HCT116 (cell line): ENCODE measurements at regions of chr6 and their contacts with region 1.

Region 1: DNA sequence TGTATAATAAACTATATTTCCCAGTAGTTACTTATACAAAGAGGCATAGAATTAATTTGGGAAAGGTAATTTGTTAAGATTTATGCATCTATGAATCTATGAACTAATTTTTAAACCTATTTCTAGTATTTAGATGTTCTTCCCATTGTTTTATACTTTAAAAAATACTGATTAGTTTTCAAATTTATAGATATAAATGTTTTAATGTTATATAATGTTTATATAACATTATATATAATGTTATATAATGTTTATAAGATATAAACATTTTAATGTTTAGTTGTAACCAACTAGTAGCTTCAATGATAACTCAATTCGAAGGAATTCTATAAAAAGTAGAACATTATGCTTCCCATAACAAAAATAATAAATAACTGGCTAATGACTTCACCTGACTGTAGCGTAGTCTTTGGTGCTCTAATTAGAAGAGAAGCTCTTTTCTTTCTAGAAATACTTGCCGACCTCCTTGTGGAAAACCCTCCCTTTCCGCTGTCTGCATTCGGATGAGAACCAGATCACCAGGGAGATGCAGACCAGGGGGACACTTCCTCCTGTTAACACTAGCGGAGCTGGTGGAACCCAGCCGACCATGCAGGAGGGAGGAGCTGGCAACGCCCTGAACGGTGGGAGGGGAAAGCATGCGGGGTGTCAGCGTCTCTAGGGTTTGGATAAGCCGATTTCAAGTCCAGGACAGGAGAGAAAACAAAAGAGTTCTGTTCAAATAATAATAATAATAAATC is 158.4 kb downstream of the OR2B2 start:
- DNase-seq: peak; percentile 90
- ATAC-seq: peak; percentile 79
- H3K4me3 ChIP-seq: peak overlapping the region; percentile 34 to 51
- H3K27ac ChIP-seq: peak overlapping the region; percentile 21; the same call in 1 of the 2 replicates
- H3K4me1 ChIP-seq: peaks cover 6 to 35% of the 10 kb centered on the region in 2 experiments
- H3K27me3 ChIP-seq: no peaks in the 10 kb centered on the region
- CTCF ChIP-seq: peak in 2 of 3 experiments; percentile 10 to 28; a peak in 2 of 6 replicates
- POLR2A ChIP-seq: peak; percentile 21
- RAD21 ChIP-seq: no peak; the same call in 1 of the 2 replicates

Region 2: GRCh38 chr6:27157459-27158315 is 596.2 kb before region 1 on chr6:
- CTCF ChIA-PET with region 1: interaction called, 3 read pairs
- POLR2A ChIA-PET with region 1: no interaction called
- RAD21 ChIA-PET with region 1: no interaction called
- intact Hi-C with region 1: loop called (anchors 5 kb)
- DNase-seq: peak; percentile 65
- ATAC-seq: peak; percentile 87
- H3K4me3 ChIP-seq: peak overlapping the region; percentile 39 to 52
- H3K27ac ChIP-seq: peak overlapping the region; percentile 57
- H3K4me1 ChIP-seq: peaks cover 4 to 41% of the 10 kb centered on the region in 2 experiments; a peak in 3 of 4 replicates
- H3K27me3 ChIP-seq: no peaks in the 10 kb centered on the region
- CTCF ChIP-seq: peak; percentile 44 to 59 (median 56); a peak in 5 of 6 replicates
- POLR2A ChIP-seq: no peak
- RAD21 ChIP-seq: peak; percentile 49

Region 3: DNA sequence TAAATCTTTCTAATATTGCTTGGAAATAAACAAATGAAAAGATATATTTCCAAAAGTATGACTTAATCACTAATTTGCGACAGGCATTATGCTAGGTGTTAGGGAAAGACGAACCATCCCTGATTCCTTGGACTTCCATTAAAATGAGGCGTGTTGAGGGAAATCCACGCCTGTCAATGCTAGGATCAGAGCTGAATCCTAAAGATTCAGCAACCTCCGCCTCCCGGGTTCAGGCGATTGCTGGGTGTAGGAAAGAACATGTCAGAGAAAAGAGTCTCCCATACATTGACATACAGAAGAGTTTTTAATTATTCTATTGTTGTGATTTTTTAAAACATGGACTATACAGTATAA is 523.1 kb before region 1 on chr6:
- CTCF ChIA-PET with region 1: interaction called, 3 read pairs
- POLR2A ChIA-PET with region 1: no interaction called
- RAD21 ChIA-PET with region 1: no interaction called
- intact Hi-C with region 1: loop called (anchors 5 kb)
- DNase-seq: peak; percentile 46
- ATAC-seq: peak; percentile 55
- H3K4me3 ChIP-seq: peak overlapping the region; percentile 34 to 54
- H3K27ac ChIP-seq: peak overlapping the region; percentile 43; the same call in 1 of the 2 replicates
- H3K4me1 ChIP-seq: peaks cover 7 to 28% of the 10 kb centered on the region in 2 experiments; a peak in 3 of 4 replicates
- H3K27me3 ChIP-seq: no peaks in the 10 kb centered on the region
- CTCF ChIP-seq: no peak
- POLR2A ChIP-seq: no peak
- RAD21 ChIP-seq: no peak

Region 4: DNA sequence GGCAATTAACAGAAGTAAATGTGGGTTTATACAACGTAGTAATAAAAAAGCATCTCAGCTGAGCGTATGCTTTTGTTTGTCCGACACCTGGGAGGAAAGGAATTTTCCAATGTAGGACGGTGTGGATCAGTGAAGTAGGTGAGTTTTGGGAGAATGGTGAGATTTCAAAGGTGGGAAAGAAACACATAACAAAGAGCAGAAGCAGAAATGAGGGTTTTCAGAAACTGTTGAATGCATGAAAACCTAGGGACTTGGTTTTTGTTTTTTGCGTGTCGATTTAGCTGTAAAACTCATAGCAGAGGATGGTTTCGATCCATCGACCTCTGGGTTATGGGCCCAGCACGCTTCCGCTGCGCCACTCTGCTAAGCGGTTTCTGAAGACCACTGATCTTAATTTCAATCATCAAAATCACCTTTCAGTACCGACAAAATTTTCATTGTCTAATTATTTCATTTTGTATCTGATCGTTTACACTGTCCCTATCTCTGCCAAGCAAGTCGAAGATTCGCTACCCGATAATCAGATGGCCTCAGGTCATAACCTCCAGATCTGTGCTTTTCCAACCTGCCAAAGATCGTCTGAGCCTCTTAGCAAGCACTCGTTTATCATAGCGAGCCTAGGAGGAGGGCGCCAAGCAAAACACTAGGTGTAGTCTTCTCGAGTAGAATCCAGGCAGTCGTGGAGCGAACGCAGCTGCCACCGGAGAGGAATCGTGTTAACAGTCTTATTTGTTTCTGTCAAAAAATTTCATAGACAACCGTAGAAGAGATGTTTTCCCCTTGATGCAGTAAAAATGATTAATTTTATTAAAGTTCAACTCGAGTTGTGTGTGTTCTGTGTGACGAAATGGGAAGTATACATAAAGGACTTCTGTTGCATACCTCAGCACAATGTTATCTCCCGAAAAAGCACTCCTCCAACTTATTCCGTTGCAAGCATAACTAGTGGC is 420.9 kb before region 1 on chr6:
- CTCF ChIA-PET with region 1: no interaction called
- POLR2A ChIA-PET with region 1: no interaction called
- RAD21 ChIA-PET with region 1: no interaction called
- intact Hi-C with region 1: no loop called
- DNase-seq: peak; percentile 76
- ATAC-seq: peak; percentile 78
- H3K4me3 ChIP-seq: peak overlapping the region; percentile 47 to 58
- H3K27ac ChIP-seq: peak overlapping the region; percentile 34; the same call in 1 of the 2 replicates
- H3K4me1 ChIP-seq: peaks cover 10 to 19% of the 10 kb centered on the region in 2 experiments; a peak in 3 of 4 replicates
- H3K27me3 ChIP-seq: no peaks in the 10 kb centered on the region
- CTCF ChIP-seq: no peak
- POLR2A ChIP-seq: no peak
- RAD21 ChIP-seq: peak; percentile 25

Region 5: DNA sequence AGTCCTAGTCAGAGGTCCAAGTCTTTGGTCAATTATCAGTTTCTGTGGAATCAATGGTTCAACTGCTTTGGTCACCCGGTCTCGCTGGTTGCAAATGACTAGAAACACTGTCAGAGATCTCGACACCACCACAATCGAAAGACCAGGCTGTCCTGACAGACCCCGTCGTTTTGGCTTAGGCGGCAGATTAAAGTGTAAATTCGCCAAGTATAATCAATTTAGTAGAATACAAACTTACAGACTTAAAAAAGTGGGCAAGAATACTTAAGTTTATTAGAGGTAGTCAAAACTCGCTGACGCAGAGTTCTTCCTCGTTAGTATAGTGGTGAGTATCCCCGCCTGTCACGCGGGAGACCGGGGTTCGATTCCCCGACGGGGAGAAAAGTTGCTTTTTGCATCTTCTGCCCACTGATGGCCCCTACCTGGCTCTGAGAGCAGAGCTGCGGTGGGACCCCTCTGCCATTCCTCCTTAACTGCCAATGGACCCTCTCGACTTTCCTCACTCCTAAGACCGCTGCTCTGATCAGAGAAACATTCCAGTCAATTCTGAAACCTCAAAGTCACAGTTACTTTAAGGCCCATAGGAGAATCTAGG is 250.3 kb before region 1 on chr6:
- CTCF ChIA-PET with region 1: interaction called, 12 read pairs
- POLR2A ChIA-PET with region 1: no interaction called
- RAD21 ChIA-PET with region 1: interaction called, 3 read pairs
- intact Hi-C with region 1: loop called (anchors 2 kb)
- DNase-seq: peak; percentile 72
- ATAC-seq: peak; percentile 51
- H3K4me3 ChIP-seq: peak overlapping the region; percentile 51 to 59
- H3K27ac ChIP-seq: peak overlapping the region; percentile 42
- H3K4me1 ChIP-seq: peaks cover 9 to 34% of the 10 kb centered on the region in 2 experiments; a peak in 3 of 4 replicates
- H3K27me3 ChIP-seq: no peaks in the 10 kb centered on the region
- CTCF ChIP-seq: no peak
- POLR2A ChIP-seq: no peak
- RAD21 ChIP-seq: no peak

Region 6: DNA sequence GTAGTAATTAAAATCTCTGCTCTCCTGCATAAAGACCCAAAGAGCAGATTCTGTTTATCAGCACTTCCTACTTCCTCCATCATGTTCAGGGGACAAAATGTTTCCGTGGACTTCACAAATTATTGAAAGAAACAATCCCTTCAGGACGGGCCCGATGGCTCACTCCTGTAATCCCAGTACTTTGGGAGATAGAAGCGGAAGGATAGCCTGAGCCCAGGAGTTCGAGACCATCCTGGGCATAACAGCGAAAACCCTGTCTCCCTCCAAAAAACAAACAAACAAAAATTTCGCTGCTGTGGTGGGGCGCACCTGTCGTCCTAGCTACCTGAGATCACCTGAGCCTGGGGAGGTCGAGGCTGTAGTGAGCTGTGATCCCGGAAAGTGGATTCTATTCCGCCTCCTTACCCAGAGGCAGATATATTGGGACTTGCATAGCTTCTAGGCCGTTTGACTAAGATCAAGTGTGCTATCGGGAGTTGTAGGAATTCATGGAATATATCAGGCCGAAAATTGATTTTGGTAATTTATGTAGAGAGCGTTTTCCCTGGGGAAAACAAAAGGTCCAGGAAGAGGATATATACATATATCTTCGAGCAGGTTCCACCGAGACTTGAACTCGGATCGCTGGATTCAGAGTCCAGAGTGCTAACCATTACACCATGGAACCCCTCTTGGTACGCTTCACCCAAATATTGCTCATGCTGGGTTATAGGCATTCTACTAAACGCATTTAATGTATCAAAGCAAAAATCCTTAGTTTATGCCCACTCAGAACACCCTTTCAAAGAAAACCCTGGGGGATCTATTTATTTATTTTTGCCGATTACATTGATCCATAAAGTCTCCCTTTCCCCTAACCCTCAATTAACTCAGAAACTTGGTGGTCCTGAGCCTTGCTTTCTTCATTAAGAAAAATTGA is 206.4 kb before region 1 on chr6:
- CTCF ChIA-PET with region 1: no interaction called
- POLR2A ChIA-PET with region 1: interaction called, 3 read pairs
- RAD21 ChIA-PET with region 1: no interaction called
- intact Hi-C with region 1: loop called (anchors 10 kb)
- DNase-seq: peak; percentile 74
- ATAC-seq: peak; percentile 50
- H3K4me3 ChIP-seq: peak overlapping the region; percentile 34 to 47
- H3K27ac ChIP-seq: peak overlapping the region; percentile 50; the same call in 1 of the 2 replicates
- H3K4me1 ChIP-seq: peaks cover 10 to 55% of the 10 kb centered on the region in 2 experiments
- H3K27me3 ChIP-seq: no peaks in the 10 kb centered on the region
- CTCF ChIP-seq: no peak
- POLR2A ChIP-seq: no peak
- RAD21 ChIP-seq: no peak

Region 7: DNA sequence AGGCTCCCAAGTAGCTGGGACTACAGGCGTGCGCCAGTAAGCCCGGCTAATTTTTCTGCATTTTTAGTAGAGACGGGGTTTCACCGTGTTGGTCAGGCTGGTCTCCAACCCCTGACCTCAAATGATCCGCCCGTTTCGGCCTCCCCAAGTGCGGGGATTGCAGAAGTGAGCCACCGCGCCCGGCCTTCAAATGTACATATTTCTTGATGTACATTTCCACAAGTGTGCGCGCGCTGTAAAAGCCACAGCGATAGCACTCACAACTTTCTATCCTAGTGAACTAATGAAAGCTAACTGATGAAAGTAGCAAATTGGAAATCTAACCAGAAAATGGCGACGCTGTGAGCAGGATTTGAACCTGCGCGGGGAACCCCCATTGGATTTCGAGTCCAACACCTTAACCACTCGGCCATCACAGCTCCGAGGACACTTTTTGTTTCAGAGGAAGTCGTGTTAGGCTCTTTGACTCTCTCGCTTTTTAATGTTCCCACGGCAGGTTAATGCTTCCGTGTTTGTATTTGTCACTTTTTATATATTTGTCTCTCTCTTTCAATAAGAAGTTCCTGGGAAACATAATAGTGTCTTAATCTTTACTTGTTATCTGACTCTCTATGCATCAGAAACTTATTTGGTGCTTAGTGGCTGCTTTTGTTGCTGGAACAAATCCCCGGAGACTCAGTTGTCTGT is 81.6 kb before region 1 on chr6:
- CTCF ChIA-PET with region 1: no interaction called
- POLR2A ChIA-PET with region 1: interaction called, 4 read pairs
- RAD21 ChIA-PET with region 1: no interaction called
- intact Hi-C with region 1: loop called (anchors 5 kb)
- DNase-seq: peak; percentile 90
- ATAC-seq: peak; percentile 76
- H3K4me3 ChIP-seq: peak overlapping the region; percentile 17 to 51
- H3K27ac ChIP-seq: peak overlapping the region; percentile 67
- H3K4me1 ChIP-seq: peaks cover 17 to 42% of the 10 kb centered on the region in 2 experiments; a peak in 3 of 4 replicates
- H3K27me3 ChIP-seq: no peaks in the 10 kb centered on the region
- CTCF ChIP-seq: no peak
- POLR2A ChIP-seq: no peak
- RAD21 ChIP-seq: no peak; the same call in 1 of the 2 replicates

Region 8: GRCh38 chr6:27720607-27721580 is 32.9 kb before region 1 on chr6:
- CTCF ChIA-PET with region 1: interaction called, 8 read pairs
- POLR2A ChIA-PET with region 1: no interaction called
- RAD21 ChIA-PET with region 1: no interaction called
- intact Hi-C with region 1: loop called (anchors 2 kb)
- DNase-seq: peak; percentile 87
- ATAC-seq: peak; percentile 92
- H3K4me3 ChIP-seq: peak overlapping the region; percentile 1 to 32; a peak in 2 of 4 replicates
- H3K27ac ChIP-seq: peak overlapping the region; percentile 82
- H3K4me1 ChIP-seq: peaks cover 17 to 29% of the 10 kb centered on the region in 2 experiments
- H3K27me3 ChIP-seq: no peaks in the 10 kb centered on the region
- CTCF ChIP-seq: peak in 1 of 3 experiments; percentile 19; a peak in 2 of 6 replicates
- POLR2A ChIP-seq: no peak
- RAD21 ChIP-seq: no peak